ENCODE measurements at regions of chr19 and their contacts with region 1.

Region 1: DNA sequence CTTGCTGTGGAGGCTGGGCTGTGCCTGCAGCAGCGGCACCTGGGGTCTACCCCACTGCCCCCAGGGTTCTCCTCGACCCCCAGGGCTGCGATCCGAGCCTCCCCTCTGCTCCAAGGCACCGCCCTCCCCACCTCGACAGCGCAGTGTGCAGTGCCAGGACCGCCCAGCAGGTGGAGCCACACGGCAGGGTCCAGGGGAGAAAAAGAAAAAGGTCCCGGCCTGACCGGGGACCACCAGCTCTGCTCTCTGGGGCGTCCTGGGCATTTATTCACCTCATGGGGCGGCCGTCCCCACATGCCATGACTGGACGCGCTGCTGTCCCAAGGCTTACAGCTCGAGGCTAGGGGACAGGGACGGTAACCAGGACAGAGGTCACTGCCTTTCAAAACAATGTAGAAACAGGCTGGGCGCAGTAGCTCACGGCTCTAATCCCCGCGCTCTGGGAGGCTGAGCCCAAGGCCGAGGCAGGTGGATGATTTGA is 10.6 kb downstream of the REXO1 start:
- DNase-seq: peak; percentile 40
- ATAC-seq: peak; percentile 22
- H3K4me3 ChIP-seq: peak overlapping the region in 1 of 3 experiments; percentile 14; a peak in 1 of 6 replicates
- H3K27ac ChIP-seq: peak overlapping the region; percentile 38
- H3K4me1 ChIP-seq: peaks cover 54% of the 10 kb centered on the region
- H3K27me3 ChIP-seq: no peaks in the 10 kb centered on the region
- CTCF ChIP-seq: peak; percentile 93
- EP300 ChIP-seq: no peak
- POLR2A ChIP-seq: no peak
- RAD21 ChIP-seq: peak; percentile 74

Region 2: GRCh38 chr19:1848399-1849131 is 10.9 kb after region 1 on chr19 and contains the start of gene REXO1:
- CTCF ChIA-PET with region 1: interaction called, 13 read pairs
- POLR2A ChIA-PET with region 1: interaction called, 7 read pairs
- in situ Hi-C with region 1: no loop called
- intact Hi-C with region 1: no loop called
- DNase-seq: peak; percentile 89
- ATAC-seq: peak; percentile 51
- H3K4me3 ChIP-seq: peak within 1 kb of the TSS; percentile 79 to 97 (median 96)
- H3K27ac ChIP-seq: peak within 1 kb of the TSS; percentile 99
- H3K4me1 ChIP-seq: peaks cover 31% of the 10 kb centered on the region
- H3K27me3 ChIP-seq: no peaks in the 10 kb centered on the region; a peak in 1 of 5 replicates
- CTCF ChIP-seq: peak; percentile 79
- EP300 ChIP-seq: no peak; a peak in 1 of 4 replicates
- POLR2A ChIP-seq: peak; percentile 39 to 92; a peak in 3 of 4 replicates
- RAD21 ChIP-seq: peak; percentile 58
- total RNA-seq, gene REXO1: 3.0 and 5.0 TPM in 2 replicates

Measured in HepG2 (cell line).